ENCODE measurements at regions of chr2 and their contacts with region 1.

Region 1: GRCh38 chr2:190781604-190782198 is 98.9 kb upstream of the GLS start:
- DNase-seq: peak; percentile 12
- ATAC-seq: peak; percentile 86
- H3K4me3 ChIP-seq: no peak overlapping the region
- H3K27ac ChIP-seq: no peak overlapping the region
- H3K4me1 ChIP-seq: no peaks in the 10 kb centered on the region
- H3K27me3 ChIP-seq: no peaks in the 10 kb centered on the region
- CTCF ChIP-seq: peak; percentile 29 to 55 (median 54); a peak in 4 of 6 replicates
- EP300 ChIP-seq: no peak
- POLR2A ChIP-seq: no peak
- RAD21 ChIP-seq: peak; percentile 85

Region 2: GRCh38 chr2:190636373-190636772 is 145.3 kb before region 1 on chr2:
- CTCF ChIA-PET with region 1: interaction called, 8 read pairs
- POLR2A ChIA-PET with region 1: no interaction called
- RAD21 ChIA-PET with region 1: interaction called, 15 read pairs
- SMC1A ChIA-PET with region 1: interaction called, 7 read pairs
- in situ Hi-C with region 1: no loop called
- intact Hi-C with region 1: no loop called
- DNase-seq: no peak
- ATAC-seq: 0 out of 3 replicates have a peak, but pooled peaks have one; percentile 12
- H3K4me3 ChIP-seq: no peak overlapping the region
- H3K27ac ChIP-seq: no peak overlapping the region
- H3K4me1 ChIP-seq: 0 out of 2 replicates have a peak, but pooled peaks cover 3% of the 10 kb centered on the region
- H3K27me3 ChIP-seq: no peaks in the 10 kb centered on the region
- CTCF ChIP-seq: no peak
- EP300 ChIP-seq: no peak
- POLR2A ChIP-seq: no peak
- RAD21 ChIP-seq: no peak

Region 3: GRCh38 chr2:190698895-190699294 is 82.8 kb before region 1 on chr2:
- CTCF ChIA-PET with region 1: interaction called, 13 read pairs
- POLR2A ChIA-PET with region 1: no interaction called
- RAD21 ChIA-PET with region 1: interaction called, 5 read pairs
- SMC1A ChIA-PET with region 1: interaction called, 12 read pairs
- in situ Hi-C with region 1: no loop called
- intact Hi-C with region 1: no loop called
- DNase-seq: no peak
- ATAC-seq: no peak
- H3K4me3 ChIP-seq: no peak overlapping the region
- H3K27ac ChIP-seq: no peak overlapping the region
- H3K4me1 ChIP-seq: peaks cover 25% of the 10 kb centered on the region
- H3K27me3 ChIP-seq: no peaks in the 10 kb centered on the region
- CTCF ChIP-seq: no peak
- EP300 ChIP-seq: no peak
- POLR2A ChIP-seq: no peak
- RAD21 ChIP-seq: no peak

Region 4: DNA sequence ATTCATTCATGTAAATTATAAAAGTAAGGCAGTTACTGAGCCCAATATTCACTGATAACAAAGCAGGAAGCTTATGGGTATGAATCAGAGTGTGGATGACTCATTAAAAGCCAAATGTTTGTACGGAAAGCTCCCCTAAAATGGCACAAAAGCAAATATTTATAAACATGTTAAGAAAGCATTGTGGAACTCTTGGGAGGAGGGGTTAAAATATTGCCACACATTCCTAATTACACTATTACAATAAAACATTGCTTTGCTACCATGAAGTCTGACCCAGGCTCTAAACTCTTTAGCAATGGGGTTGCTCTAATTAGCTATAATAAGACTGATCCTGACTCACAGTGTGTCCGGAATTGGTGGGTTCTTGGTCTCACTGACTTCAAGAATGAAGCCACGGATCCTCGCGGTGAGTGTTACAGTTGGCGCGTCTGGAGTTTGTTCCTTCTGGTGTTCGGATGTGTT is 21.9 kb before region 1 on chr2:
- CTCF ChIA-PET with region 1: interaction called, 29 read pairs
- POLR2A ChIA-PET with region 1: interaction called, 4 read pairs
- RAD21 ChIA-PET with region 1: interaction called, 7 read pairs
- SMC1A ChIA-PET with region 1: interaction called, 17 read pairs
- in situ Hi-C with region 1: no loop called
- intact Hi-C with region 1: no loop called
- DNase-seq: no peak
- ATAC-seq: no peak
- H3K4me3 ChIP-seq: no peak overlapping the region
- H3K27ac ChIP-seq: no peak overlapping the region
- H3K4me1 ChIP-seq: no peaks in the 10 kb centered on the region
- H3K27me3 ChIP-seq: no peaks in the 10 kb centered on the region
- CTCF ChIP-seq: no peak
- EP300 ChIP-seq: no peak
- POLR2A ChIP-seq: no peak
- RAD21 ChIP-seq: no peak

Region 5: GRCh38 chr2:190804182-190804795 is 22.6 kb after region 1 on chr2:
- CTCF ChIA-PET with region 1: interaction called, 73 read pairs
- POLR2A ChIA-PET with region 1: no interaction called
- RAD21 ChIA-PET with region 1: interaction called, 19 read pairs
- SMC1A ChIA-PET with region 1: interaction called, 23 read pairs
- in situ Hi-C with region 1: no loop called
- intact Hi-C with region 1: no loop called
- DNase-seq: no peak
- ATAC-seq: no peak
- H3K4me3 ChIP-seq: no peak overlapping the region
- H3K27ac ChIP-seq: no peak overlapping the region
- H3K4me1 ChIP-seq: peaks cover 5% of the 10 kb centered on the region; the same call in 1 of the 2 replicates
- H3K27me3 ChIP-seq: no peaks in the 10 kb centered on the region
- CTCF ChIP-seq: peak; percentile 34 to 63 (median 48); a peak in 5 of 6 replicates
- EP300 ChIP-seq: no peak
- POLR2A ChIP-seq: no peak
- RAD21 ChIP-seq: peak; percentile 89

Region 6: DNA sequence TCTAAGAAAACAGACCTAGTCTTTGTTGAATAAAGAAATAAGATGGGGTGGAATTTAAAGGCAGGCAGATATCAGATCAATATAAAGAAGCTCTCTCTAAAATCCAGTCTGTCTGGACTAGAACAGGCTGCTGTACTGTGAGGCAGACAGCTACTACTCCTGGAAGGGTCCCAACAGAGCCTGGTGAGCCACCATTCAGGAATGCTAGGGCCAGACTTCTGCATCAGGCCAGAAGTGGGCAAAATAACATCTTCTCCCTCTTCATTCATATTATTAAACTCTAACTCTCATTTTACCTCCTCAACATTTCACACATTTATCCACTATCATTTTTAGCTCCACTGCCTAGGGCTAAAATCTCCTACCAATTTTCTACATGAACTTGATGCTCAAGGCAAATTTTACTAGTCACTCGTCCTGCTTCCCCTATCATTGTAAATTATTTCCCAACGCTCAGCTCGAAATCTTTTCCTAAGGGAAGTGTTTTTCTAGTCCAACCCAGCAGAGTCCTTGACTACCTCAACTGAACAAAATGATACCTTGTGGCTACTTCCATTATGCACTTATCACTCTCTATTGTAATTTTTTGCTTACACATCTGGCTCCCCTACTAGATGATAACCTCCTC is 53.7 kb after region 1 on chr2:
- CTCF ChIA-PET with region 1: no interaction called
- POLR2A ChIA-PET with region 1: no interaction called
- RAD21 ChIA-PET with region 1: no interaction called
- SMC1A ChIA-PET with region 1: no interaction called
- in situ Hi-C with region 1: no loop called
- intact Hi-C with region 1: no loop called
- DNase-seq: no peak
- ATAC-seq: no peak
- H3K4me3 ChIP-seq: no peak overlapping the region
- H3K27ac ChIP-seq: no peak overlapping the region
- H3K4me1 ChIP-seq: no peaks in the 10 kb centered on the region
- H3K27me3 ChIP-seq: no peaks in the 10 kb centered on the region
- CTCF ChIP-seq: no peak
- EP300 ChIP-seq: no peak
- POLR2A ChIP-seq: no peak
- RAD21 ChIP-seq: no peak

Region 7: GRCh38 chr2:190947711-190948251 is 166.1 kb after region 1 on chr2:
- CTCF ChIA-PET with region 1: interaction called, 13 read pairs
- POLR2A ChIA-PET with region 1: no interaction called
- RAD21 ChIA-PET with region 1: interaction called, 7 read pairs
- SMC1A ChIA-PET with region 1: interaction called, 12 read pairs
- in situ Hi-C with region 1: no loop called
- intact Hi-C with region 1: loop called (anchors 5 kb)
- DNase-seq: peak; percentile 45
- ATAC-seq: peak; percentile 69
- H3K4me3 ChIP-seq: no peak overlapping the region
- H3K27ac ChIP-seq: 0 out of 2 replicates have a peak overlapping the region, but pooled peaks have one; percentile 27
- H3K4me1 ChIP-seq: peaks cover 8% of the 10 kb centered on the region; the same call in 1 of the 2 replicates
- H3K27me3 ChIP-seq: no peaks in the 10 kb centered on the region
- CTCF ChIP-seq: peak; percentile 21 to 53 (median 34); a peak in 4 of 6 replicates
- EP300 ChIP-seq: no peak
- POLR2A ChIP-seq: no peak
- RAD21 ChIP-seq: peak; percentile 66

Region 8: GRCh38 chr2:191150600-191151330 is 369.1 kb after region 1 on chr2 and contains the start of gene STAT4:
- CTCF ChIA-PET with region 1: interaction called, 11 read pairs
- POLR2A ChIA-PET with region 1: no interaction called
- RAD21 ChIA-PET with region 1: interaction called, 3 read pairs
- SMC1A ChIA-PET with region 1: interaction called, 8 read pairs
- in situ Hi-C with region 1: no loop called
- intact Hi-C with region 1: no loop called
- DNase-seq: peak; percentile 45
- ATAC-seq: peak; percentile 89
- H3K4me3 ChIP-seq: peak within 1 kb of the TSS; percentile 78
- H3K27ac ChIP-seq: no peak within 1 kb of the TSS
- H3K4me1 ChIP-seq: peaks cover 7% of the 10 kb centered on the region
- H3K27me3 ChIP-seq: peaks cover 0 to 3% of the 10 kb centered on the region in 2 experiments; a peak in 1 of 4 replicates
- CTCF ChIP-seq: no peak; a peak in 1 of 6 replicates
- EP300 ChIP-seq: peak; percentile 84 to 89; a peak in 3 of 4 replicates
- POLR2A ChIP-seq: peak; percentile 62
- RAD21 ChIP-seq: peak; percentile 28; the same call in 1 of the 2 replicates
- polyA plus RNA-seq, gene STAT4: 3.1 to 4.4 TPM

Measured in GM12878 (cell line).